Adrenal gland (tissue), 19 donors: ENCODE measurements at regions of chr11 and their contacts with region 1.

Region 1: DNA sequence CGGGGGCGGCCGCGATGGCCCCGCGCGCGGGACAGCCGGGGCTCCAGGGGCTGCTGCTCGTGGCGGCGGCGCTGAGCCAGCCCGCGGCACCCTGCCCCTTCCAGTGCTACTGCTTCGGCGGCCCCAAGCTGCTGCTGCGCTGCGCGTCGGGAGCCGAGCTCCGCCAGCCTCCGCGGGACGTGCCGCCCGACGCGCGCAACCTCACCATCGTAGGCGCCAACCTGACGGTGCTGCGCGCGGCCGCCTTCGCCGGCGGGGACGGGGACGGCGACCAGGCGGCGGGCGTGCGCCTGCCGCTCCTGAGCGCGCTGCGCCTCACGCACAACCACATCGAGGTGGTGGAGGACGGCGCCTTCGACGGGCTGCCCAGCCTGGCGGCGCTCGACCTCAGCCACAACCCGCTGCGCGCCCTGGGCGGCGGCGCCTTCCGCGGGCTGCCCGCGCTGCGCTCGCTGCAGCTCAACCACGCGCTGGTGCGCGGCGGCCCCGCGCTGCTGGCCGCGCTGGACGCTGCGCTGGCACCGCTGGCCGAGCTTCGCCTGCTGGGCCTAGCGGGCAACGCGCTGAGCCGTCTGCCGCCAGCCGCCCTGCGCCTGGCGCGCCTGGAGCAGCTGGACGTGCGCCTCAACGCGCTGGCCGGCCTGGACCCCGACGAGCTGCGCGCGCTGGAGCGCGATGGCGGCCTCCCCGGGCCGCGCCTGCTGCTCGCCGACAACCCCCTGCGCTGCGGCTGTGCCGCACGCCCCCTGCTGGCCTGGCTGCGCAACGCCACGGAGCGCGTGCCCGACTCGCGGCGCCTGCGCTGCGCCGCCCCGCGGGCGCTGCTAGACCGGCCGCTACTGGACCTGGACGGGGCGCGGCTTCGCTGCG is 697 bp downstream of the TPBGL start:
- DNase-seq: peak; percentile 73 to 91 (median 85)
- H3K4me3 ChIP-seq: peak overlapping the region in 1 of 4 donors; percentile 62
- H3K27ac ChIP-seq: peak overlapping the region in 1 of 5 donors; percentile 30
- H3K4me1 ChIP-seq: peaks cover 0 to 9% of the 10 kb centered on the region in 2 donors
- H3K27me3 ChIP-seq: no peaks in the 10 kb centered on the region
- CTCF ChIP-seq: peak in 3 of 6 experiments; percentile 96 to 100 (median 100)
- POLR2A ChIP-seq: peak in 1 of 2 donors; percentile 18

Region 2: GRCh38 chr11:75022759-75023396 is 218.4 kb before region 1 on chr11:
- intact Hi-C with region 1: loop called (anchors 5 to 10 kb)
- DNase-seq: peak; percentile 91 to 98 (median 96)
- H3K4me3 ChIP-seq: no peak overlapping the region
- H3K27ac ChIP-seq: peak overlapping the region; percentile 29 to 82 (median 60)
- H3K4me1 ChIP-seq: peaks cover 10 to 16% of the 10 kb centered on the region in 2 donors
- H3K27me3 ChIP-seq: no peaks in the 10 kb centered on the region
- CTCF ChIP-seq: peak; percentile 96 to 99 (median 98)
- POLR2A ChIP-seq: no peak

Region 3: GRCh38 chr11:75055471-75055870 is 185.8 kb before region 1 on chr11:
- intact Hi-C with region 1: no loop called
- DNase-seq: no peak
- H3K4me3 ChIP-seq: no peak overlapping the region
- H3K27ac ChIP-seq: no peak overlapping the region
- H3K4me1 ChIP-seq: no peaks in the 10 kb centered on the region
- H3K27me3 ChIP-seq: no peaks in the 10 kb centered on the region
- CTCF ChIP-seq: no peak
- POLR2A ChIP-seq: no peak